ENCODE measurements at regions of chr2 and their contacts with region 1.

Region 1: GRCh38 chr2:174697255-174697654 is 67.0 kb downstream of the CHRNA1 start:
- DNase-seq: peak; percentile 76 to 91
- ATAC-seq: peak; percentile 95 to 98
- H3K4me3 ChIP-seq: no peak overlapping the region
- H3K27ac ChIP-seq: no peak overlapping the region
- H3K4me1 ChIP-seq: no peaks in the 10 kb centered on the region
- CTCF ChIP-seq: peak; percentile 77
- EP300 ChIP-seq: no peak
- POLR2A ChIP-seq: no peak
- RAD21 ChIP-seq: peak; percentile 54 to 66; a peak in 4 of 5 replicates

Region 2: GRCh38 chr2:174577967-174578589 is 119.2 kb before region 1 on chr2:
- CTCF ChIA-PET with region 1: interaction called, 45 read pairs
- POLR2A ChIA-PET with region 1: no interaction called
- DNase-seq: peak in 1 of 2 experiments; percentile 50
- ATAC-seq: peak; percentile 70 to 84; a peak in 4 of 6 replicates
- H3K4me3 ChIP-seq: no peak overlapping the region
- H3K27ac ChIP-seq: no peak overlapping the region
- H3K4me1 ChIP-seq: no peaks in the 10 kb centered on the region
- CTCF ChIP-seq: peak; percentile 71
- EP300 ChIP-seq: no peak
- POLR2A ChIP-seq: no peak
- RAD21 ChIP-seq: peak; percentile 80 to 91

Region 3: DNA sequence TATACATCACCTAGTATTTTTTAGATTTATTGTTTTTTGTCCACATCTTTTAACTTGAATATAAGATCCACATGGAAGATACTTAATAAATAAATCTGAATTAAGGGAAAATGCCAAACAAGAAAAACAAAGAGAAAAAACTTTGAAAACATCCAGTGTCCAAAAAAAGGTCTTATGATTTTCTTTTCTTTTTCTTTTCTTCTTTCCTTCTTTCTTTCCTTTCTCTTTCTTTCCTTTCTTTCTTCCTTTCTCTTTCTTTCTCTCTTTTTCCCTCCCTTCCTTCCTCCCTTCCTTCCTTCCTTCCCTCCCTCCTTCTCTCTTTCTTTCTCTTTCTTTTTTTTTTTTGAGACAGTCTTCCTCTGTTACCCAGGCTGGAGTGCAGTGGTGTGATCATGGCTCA is 70.0 kb before region 1 on chr2:
- CTCF ChIA-PET with region 1: no interaction called
- POLR2A ChIA-PET with region 1: no interaction called
- DNase-seq: no peak
- ATAC-seq: no peak
- H3K4me3 ChIP-seq: no peak overlapping the region
- H3K27ac ChIP-seq: no peak overlapping the region
- H3K4me1 ChIP-seq: peaks cover 31% of the 10 kb centered on the region
- CTCF ChIP-seq: no peak
- EP300 ChIP-seq: no peak
- POLR2A ChIP-seq: no peak
- RAD21 ChIP-seq: no peak

Region 4: GRCh38 chr2:174729797-174730697 is 32.8 kb after region 1 on chr2:
- CTCF ChIA-PET with region 1: interaction called, 26 read pairs
- POLR2A ChIA-PET with region 1: no interaction called
- DNase-seq: peak; percentile 11 to 43
- ATAC-seq: peak; percentile 58 to 84
- H3K4me3 ChIP-seq: peak overlapping the region; percentile 51
- H3K27ac ChIP-seq: peak overlapping the region in 1 of 2 experiments; percentile 61; a peak in 3 of 6 replicates
- H3K4me1 ChIP-seq: no peaks in the 10 kb centered on the region
- CTCF ChIP-seq: no peak
- EP300 ChIP-seq: no peak
- POLR2A ChIP-seq: no peak
- RAD21 ChIP-seq: no peak

Region 5: DNA sequence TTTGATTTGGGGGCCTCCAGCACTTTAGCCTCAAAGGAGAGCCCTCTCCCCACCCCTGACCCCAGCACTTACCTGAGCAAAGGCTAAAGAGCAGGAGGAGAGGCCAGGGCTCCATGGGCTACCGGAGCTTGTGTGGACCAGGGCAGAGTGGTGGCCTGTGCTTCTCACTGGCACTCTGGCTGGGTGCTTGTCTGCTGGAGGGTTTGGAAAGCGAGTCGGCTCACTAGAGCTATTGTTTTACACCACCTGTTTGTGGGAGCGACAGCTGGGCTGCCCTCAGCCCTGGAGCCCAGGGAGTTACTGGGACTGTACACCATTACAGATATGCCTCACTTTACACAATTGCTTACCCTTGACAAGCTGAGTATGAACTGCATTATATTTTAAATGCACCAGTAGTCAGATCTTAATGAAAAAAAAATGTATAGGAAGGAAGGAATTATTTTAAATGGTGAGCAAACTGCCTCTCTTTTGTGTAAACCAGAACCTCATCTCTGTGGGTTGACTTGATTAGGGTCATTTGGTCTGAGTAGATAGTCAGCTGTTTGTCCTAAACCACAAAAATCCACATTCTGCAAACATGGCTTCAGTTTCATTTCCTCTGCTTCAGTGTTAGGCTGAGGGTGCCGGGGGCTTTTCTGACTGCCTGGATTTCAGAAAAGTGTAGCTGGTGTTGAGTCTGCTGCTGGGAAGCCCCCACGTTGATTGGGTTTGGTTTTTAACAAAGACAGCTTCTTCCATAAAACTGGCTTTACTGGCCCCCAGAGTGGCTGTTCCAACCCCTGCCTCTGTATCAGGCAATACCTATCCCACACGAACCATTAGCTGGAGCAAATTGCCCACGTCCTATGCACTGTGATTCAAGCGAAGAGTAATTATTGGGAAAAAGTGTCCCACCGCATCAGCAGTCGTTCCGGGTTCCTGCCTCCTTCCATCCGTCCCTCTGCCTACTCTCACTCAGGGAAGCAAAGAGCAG is 67.3 kb after region 1 on chr2 and contains the start of gene CHRNA1:
- CTCF ChIA-PET with region 1: interaction called, 11 read pairs
- POLR2A ChIA-PET with region 1: no interaction called
- DNase-seq: no peak
- ATAC-seq: peak in 1 of 2 experiments; percentile 45; a peak in 3 of 6 replicates
- H3K4me3 ChIP-seq: no peak within 1 kb of the TSS
- H3K27ac ChIP-seq: peak within 1 kb of the TSS in 1 of 2 experiments; percentile 2; a peak in 1 of 6 replicates
- H3K4me1 ChIP-seq: peaks cover 10% of the 10 kb centered on the region; the same call in 1 of the 3 replicates
- CTCF ChIP-seq: no peak
- EP300 ChIP-seq: no peak
- POLR2A ChIP-seq: no peak
- RAD21 ChIP-seq: no peak
- polyA plus RNA-seq, gene CHRNA1: not detected in 2 replicates

Region 6: DNA sequence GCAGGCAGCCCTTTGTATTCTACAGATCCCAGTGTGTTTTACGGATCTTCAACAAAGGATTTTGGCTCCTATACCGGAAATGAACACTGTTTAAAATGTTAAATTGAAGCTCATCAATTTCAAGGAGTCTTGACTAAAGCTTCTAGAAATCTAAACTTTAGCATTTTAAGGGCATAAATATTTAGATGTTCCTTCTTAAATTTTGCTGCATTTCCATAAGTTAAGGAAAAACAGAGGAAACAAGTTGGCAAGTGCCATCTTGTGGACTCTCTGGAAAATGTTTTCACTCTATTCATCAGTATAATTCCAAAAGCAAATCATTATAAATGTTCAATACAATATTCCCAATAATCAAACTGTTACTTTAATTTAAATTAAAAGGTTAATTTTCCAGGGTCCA is 288.4 kb after region 1 on chr2:
- CTCF ChIA-PET with region 1: interaction called, 22 read pairs
- POLR2A ChIA-PET with region 1: no interaction called
- DNase-seq: no peak
- ATAC-seq: peak in 1 of 2 experiments; percentile 38; a peak in 1 of 6 replicates
- H3K4me3 ChIP-seq: no peak overlapping the region
- H3K27ac ChIP-seq: no peak overlapping the region
- H3K4me1 ChIP-seq: peaks cover 7% of the 10 kb centered on the region; the same call in 2 of the 3 replicates
- CTCF ChIP-seq: peak; percentile 89
- EP300 ChIP-seq: no peak
- POLR2A ChIP-seq: no peak
- RAD21 ChIP-seq: peak; percentile 86 to 87

Region 7: GRCh38 chr2:175181104-175181876 is 484.0 kb after region 1 on chr2 and contains the start of gene ATP5MC3:
- CTCF ChIA-PET with region 1: no interaction called
- POLR2A ChIA-PET with region 1: no interaction called
- DNase-seq: peak; percentile 96 to 97
- ATAC-seq: peak; percentile 93 to 97
- H3K4me3 ChIP-seq: peak within 1 kb of the TSS; percentile 82
- H3K27ac ChIP-seq: peak within 1 kb of the TSS; percentile 83 to 93
- H3K4me1 ChIP-seq: peaks cover 15% of the 10 kb centered on the region; the same call in 2 of the 3 replicates
- CTCF ChIP-seq: no peak
- EP300 ChIP-seq: no peak
- POLR2A ChIP-seq: peak; percentile 91
- RAD21 ChIP-seq: no peak
- polyA plus RNA-seq, gene ATP5MC3: 525 and 642 TPM in 2 replicates

Measured in A549 (cell line).